ENCODE measurements at regions of chr12 and their contacts with region 1.

Region 1: DNA sequence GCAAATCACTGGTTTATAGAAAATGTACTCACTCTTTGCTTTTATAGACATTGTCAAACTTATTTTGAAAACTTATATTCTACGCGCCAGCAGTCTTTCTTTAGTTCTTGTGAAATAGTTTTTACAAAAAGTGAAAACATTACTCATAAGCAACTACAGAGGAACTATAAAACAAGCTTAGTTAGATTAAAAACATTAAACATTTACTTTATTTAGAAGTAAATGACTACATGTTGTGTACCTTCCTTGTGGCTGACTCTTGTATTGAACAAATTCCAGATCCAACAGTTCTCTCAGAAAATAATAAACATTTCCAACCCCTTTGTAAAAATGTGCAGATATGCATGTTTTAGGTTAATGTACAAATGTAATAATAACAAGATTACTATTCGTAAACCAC is 198.5 kb downstream of the SOX5 start:
- DNase-seq: no peak
- H3K4me3 ChIP-seq: no peak overlapping the region
- H3K27ac ChIP-seq: no peak overlapping the region
- H3K4me1 ChIP-seq: no peaks in the 10 kb centered on the region
- H3K27me3 ChIP-seq: no peaks in the 10 kb centered on the region
- CTCF ChIP-seq: no peak

Region 2: GRCh38 chr12:23719493-23719892 is 31.4 kb before region 1 on chr12:
- CTCF ChIA-PET with region 1: no interaction called
- POLR2A ChIA-PET with region 1: interaction called, 16 read pairs
- intact Hi-C with region 1: no loop called
- DNase-seq: no peak
- H3K4me3 ChIP-seq: no peak overlapping the region
- H3K27ac ChIP-seq: no peak overlapping the region
- H3K4me1 ChIP-seq: no peaks in the 10 kb centered on the region
- H3K27me3 ChIP-seq: no peaks in the 10 kb centered on the region
- CTCF ChIP-seq: no peak

Region 3: GRCh38 chr12:24479131-24479530 is 728.2 kb after region 1 on chr12:
- CTCF ChIA-PET with region 1: no interaction called
- POLR2A ChIA-PET with region 1: no interaction called
- intact Hi-C with region 1: no loop called
- DNase-seq: peak; percentile 17
- H3K4me3 ChIP-seq: no peak overlapping the region
- H3K27ac ChIP-seq: no peak overlapping the region
- H3K4me1 ChIP-seq: peaks cover 6% of the 10 kb centered on the region
- H3K27me3 ChIP-seq: no peaks in the 10 kb centered on the region
- CTCF ChIP-seq: no peak